Motor neuron (in vitro differentiated cells): ENCODE measurements at regions of chr6 and their contacts with region 1.

Region 1: GRCh38 chr6:104525677-104526312 is 333.9 kb downstream of the HACE1 start:
- ATAC-seq: peak; percentile 84 to 95 (median 92)
- H3K4me3 ChIP-seq: no peak overlapping the region
- H3K27ac ChIP-seq: no peak overlapping the region
- H3K4me1 ChIP-seq: peaks cover 5 to 11% of the 10 kb centered on the region in 2 donors

Region 2: DNA sequence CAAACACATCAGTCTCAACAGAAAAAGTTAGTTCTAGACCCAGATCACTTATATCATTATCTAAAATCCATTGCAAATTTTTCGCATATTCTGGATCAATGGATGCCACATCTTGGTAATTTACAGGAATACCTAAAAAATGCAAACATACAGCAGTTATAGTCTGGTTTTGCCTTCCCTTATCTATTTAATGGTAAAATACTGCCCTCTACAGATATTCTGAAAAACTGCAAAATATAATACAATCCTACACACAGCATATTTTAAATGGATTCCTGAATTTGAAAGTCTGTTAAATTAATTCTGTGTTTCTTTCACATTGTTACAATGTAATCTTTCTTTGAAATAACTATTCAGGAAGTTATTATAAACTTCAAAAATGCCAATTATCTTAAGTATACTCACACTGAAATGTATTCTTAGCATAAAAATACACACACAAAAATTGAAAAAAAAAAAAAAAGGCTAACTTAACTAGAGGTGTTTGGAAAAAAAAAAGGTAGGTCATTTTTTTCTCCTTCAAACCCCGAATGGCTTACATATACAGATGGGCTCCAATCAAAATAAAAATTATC is 245.6 kb after region 1 on chr6:
- in situ Hi-C with region 1: loop called in 1 of 9 experiments (anchors 25 kb)
- ATAC-seq: peak in 7 of 8 experiments; percentile 37 to 94 (median 64)
- H3K4me3 ChIP-seq: no peak overlapping the region
- H3K27ac ChIP-seq: no peak overlapping the region
- H3K4me1 ChIP-seq: no peaks in the 10 kb centered on the region